Activated naive CD8-positive, alpha-beta T cell treated with anti-CD3 and anti-CD28 coated beads, Interleukin-2, amount 10 ng/mL, durations not matched to agents 7 days and 5 days (primary cell): ENCODE measurements at regions of chr15 and their contacts with region 1.

Region 1: DNA sequence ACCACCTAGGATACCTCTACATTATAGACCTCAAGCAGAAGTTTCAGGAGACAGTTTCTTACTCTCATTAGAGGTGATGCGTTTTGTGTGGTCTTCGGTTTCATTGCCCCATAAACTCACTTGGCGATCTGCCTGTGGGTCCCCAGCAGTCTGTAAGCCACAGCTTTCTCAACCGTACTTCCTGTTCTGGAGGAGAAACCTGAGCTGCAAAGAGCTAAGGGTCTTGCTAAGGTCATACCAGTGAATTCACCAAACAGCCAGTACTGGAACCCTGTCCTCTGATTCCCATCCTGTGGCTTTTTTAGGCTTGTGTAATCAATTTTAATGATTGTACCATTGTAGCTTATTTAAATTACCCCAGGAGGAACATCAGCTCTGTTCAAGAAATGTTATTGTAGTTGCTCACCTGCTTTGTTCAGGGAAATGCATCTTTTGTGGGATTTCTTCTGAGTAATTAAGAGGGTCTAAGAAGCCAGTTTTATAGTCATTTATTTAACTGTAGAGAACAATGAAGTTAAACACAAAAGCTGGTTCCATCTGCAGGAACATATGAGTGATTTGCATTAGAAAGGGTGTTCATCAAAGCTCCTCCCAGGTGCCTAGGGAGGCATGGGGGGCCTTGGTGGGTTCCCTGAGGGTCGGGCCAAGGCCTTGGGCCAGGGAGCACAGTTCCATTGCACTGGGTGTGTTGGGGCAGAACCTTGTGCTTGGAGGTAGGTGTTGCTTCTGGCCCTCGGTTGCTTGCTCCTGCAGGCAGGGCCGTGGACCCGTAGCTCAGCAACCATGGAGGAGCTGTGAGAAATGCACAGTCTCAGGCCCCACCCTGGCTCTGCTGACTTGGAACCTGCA is 69.6 kb downstream of the APBA2 start:
- DNase-seq: no peak
- ATAC-seq: peak; percentile 84
- H3K4me3 Mint-ChIP-seq: peak overlapping the region; percentile 72
- H3K27ac Mint-ChIP-seq: peak overlapping the region; percentile 86
- H3K4me1 Mint-ChIP-seq: peaks cover 44% of the 10 kb centered on the region
- H3K27me3 Mint-ChIP-seq: no peaks in the 10 kb centered on the region

Region 2: GRCh38 chr15:28935326-28935725 is 20.1 kb before region 1 on chr15:
- POLR2A ChIA-PET with region 1: interaction called, 13 read pairs
- DNase-seq: peak; percentile 77
- ATAC-seq: peak; percentile 80
- H3K4me3 Mint-ChIP-seq: peak overlapping the region; percentile 67
- H3K27ac Mint-ChIP-seq: peak overlapping the region; percentile 85
- H3K4me1 Mint-ChIP-seq: peaks cover 61% of the 10 kb centered on the region
- H3K27me3 Mint-ChIP-seq: no peaks in the 10 kb centered on the region

Region 3: GRCh38 chr15:28942046-28942445 is 13.3 kb before region 1 on chr15:
- POLR2A ChIA-PET with region 1: interaction called, 16 read pairs
- DNase-seq: peak; percentile 63
- ATAC-seq: peak; percentile 76
- H3K4me3 Mint-ChIP-seq: peak overlapping the region; percentile 74
- H3K27ac Mint-ChIP-seq: peak overlapping the region; percentile 86
- H3K4me1 Mint-ChIP-seq: peaks cover 66% of the 10 kb centered on the region
- H3K27me3 Mint-ChIP-seq: no peaks in the 10 kb centered on the region